Cardiac septum (tissue), 1 donor: ENCODE measurements at regions of chr3 and their contacts with region 1.

Region 1: GRCh38 chr3:114383875-114384557 is 90.2 kb downstream of the TIGIT start:
- DNase-seq: peak; percentile 89

Region 2: GRCh38 chr3:114418724-114419543 is 34.9 kb after region 1 on chr3:
- intact Hi-C with region 1: loop called (anchors 2 kb)
- DNase-seq: no peak

Region 3: DNA sequence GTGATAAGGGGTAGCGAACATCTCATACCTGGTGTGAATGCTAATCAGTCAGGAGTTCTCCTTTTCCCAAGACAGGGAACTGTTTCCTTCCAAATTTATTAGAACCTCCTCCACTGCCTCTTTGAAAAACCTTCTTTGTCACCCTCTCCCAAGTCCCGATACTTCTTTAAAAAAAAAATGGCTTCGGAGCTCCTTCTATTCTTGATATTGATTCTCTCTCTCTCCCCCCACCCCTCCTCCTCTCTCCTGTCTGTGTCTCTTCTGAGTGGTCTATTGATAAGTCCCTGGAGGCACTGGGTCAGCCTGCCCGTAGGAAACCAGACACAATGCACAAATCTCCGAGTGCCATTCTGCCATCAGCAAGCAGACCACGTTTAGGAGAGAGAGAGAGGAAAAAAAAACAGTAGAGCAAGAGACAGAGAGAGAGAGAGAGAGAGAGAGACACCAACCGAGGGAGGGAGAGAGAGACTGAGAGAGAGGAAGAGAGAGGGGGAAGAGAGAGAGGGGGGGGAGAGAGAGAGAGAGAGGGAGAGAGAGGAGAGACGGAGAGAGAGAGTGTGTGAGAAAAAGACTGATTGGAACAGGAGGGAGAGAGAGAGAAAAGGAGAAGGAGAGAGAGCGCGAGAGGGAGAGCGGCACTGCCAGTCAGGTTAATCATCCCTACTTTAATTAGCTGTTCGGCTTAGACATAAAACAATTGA is 70.7 kb after region 1 on chr3:
- intact Hi-C with region 1: loop called (anchors 2 kb)
- DNase-seq: no peak

Region 4: GRCh38 chr3:114624571-114625181 is 240.7 kb after region 1 on chr3:
- intact Hi-C with region 1: loop called (anchors 5 kb)
- DNase-seq: peak; percentile 97

Region 5: GRCh38 chr3:115085197-115085865 is 701.3 kb after region 1 on chr3:
- intact Hi-C with region 1: loop called (anchors 5 kb)
- DNase-seq: no peak

Region 6: DNA sequence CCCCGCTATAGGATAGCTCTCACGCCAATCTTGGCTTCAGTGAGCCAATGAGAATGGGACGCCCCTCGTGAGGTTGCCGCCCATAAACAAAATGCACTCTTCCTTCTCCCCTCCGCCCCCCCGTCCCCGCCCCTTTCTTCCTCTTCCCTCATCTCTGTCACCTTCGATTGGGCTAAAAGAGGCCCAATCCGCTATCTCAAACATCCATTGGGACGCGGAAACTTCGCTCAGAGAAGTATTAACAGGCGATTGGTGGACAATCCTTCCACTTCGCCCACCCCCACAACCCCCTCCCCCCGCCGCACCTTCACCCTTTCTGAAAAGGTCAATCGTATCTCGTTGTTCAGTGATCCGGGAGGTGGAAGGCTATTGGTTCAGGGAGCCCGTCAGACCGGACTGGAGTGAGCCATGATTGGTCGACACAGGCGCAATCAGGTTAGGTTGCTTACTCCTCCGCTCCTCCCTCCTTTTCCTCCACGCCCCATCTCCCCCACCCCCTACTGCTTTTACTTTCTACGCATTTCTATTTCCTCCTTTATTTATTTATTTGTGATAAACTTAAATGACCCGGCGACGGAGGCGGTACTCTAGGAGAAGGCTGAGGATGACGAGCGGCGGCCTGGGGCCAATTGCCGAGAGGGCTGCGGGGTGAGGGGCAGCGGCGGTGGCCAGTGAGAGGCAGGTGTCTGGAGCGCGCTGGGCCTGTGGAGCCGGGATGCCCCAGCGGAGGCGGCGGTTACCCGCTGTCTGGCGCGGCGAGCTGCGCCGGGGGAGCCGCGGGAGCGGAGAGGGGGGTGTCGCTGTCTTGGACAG is 763.5 kb after region 1 on chr3:
- intact Hi-C with region 1: loop called (anchors 10 kb)
- DNase-seq: peak; percentile 98

Region 7: GRCh38 chr3:115658337-115659181 is 1274.5 kb after region 1 on chr3:
- intact Hi-C with region 1: loop called (anchors 5 kb)
- DNase-seq: peak; percentile 88